ENCODE measurements at regions of chrX and their contacts with region 1.

Region 1: GRCh38 chrX:13092455-13092941 is 48.1 kb upstream of the FAM9C start:
- DNase-seq: no peak
- H3K4me3 ChIP-seq: no peak overlapping the region
- H3K27ac ChIP-seq: peak overlapping the region; percentile 76
- H3K4me1 ChIP-seq: peaks cover 16% of the 10 kb centered on the region
- H3K27me3 ChIP-seq: no peaks in the 10 kb centered on the region
- CTCF ChIP-seq: no peak
- POLR2A ChIP-seq: no peak

Region 2: DNA sequence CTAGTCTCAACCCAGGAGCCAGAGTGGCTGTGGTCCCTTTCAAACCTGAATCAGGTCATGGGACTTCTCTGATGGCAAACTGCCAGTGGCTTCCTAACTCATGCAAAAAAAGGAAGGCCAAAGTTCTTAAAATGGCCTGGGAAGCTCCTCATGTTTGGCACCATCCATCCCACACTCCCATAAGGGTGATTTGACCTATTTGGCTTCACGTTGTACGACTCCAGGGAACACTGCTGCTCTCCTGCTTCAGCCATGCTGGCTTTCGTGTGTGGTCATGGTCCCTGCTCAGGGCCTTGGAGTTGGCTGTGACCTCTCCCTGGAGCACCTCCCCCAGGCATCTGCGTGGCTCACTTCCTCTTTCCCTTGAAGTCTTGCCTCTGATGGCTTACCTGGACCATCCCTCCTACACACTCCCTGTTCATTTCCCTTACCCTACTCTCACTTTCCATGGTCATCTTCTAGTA is 130.4 kb before region 1 on chrX:
- intact Hi-C with region 1: no loop called
- DNase-seq: no peak
- H3K4me3 ChIP-seq: no peak overlapping the region
- H3K27ac ChIP-seq: no peak overlapping the region
- H3K4me1 ChIP-seq: peaks cover 5% of the 10 kb centered on the region
- H3K27me3 ChIP-seq: no peaks in the 10 kb centered on the region
- CTCF ChIP-seq: no peak
- POLR2A ChIP-seq: no peak

Region 3: GRCh38 chrX:12974796-12975669 is 117.5 kb before region 1 on chrX and contains the start of gene TMSB4X:
- intact Hi-C with region 1: loop called (anchors 10 kb)
- DNase-seq: no peak
- H3K4me3 ChIP-seq: peak within 1 kb of the TSS; percentile 49 to 63
- H3K27ac ChIP-seq: peak within 1 kb of the TSS; percentile 92
- H3K4me1 ChIP-seq: no peaks in the 10 kb centered on the region
- H3K27me3 ChIP-seq: no peaks in the 10 kb centered on the region
- CTCF ChIP-seq: no peak
- POLR2A ChIP-seq: peak; percentile 68 to 97
- total RNA-seq, gene TMSB4X: 3,119 TPM

Measured in vagina (tissue), 2 donors.